ENCODE measurements at regions of chr9 and their contacts with region 1.

Region 1: GRCh38 chr9:95510709-95511615 is 5.8 kb downstream of the PTCH1 start:
- DNase-seq: peak; percentile 82
- H3K4me3 Mint-ChIP-seq: peak overlapping the region; percentile 88
- H3K27ac Mint-ChIP-seq: peak overlapping the region; percentile 81
- H3K4me1 Mint-ChIP-seq: peaks cover 30% of the 10 kb centered on the region
- H3K27me3 Mint-ChIP-seq: peaks cover 46% of the 10 kb centered on the region

Region 2: DNA sequence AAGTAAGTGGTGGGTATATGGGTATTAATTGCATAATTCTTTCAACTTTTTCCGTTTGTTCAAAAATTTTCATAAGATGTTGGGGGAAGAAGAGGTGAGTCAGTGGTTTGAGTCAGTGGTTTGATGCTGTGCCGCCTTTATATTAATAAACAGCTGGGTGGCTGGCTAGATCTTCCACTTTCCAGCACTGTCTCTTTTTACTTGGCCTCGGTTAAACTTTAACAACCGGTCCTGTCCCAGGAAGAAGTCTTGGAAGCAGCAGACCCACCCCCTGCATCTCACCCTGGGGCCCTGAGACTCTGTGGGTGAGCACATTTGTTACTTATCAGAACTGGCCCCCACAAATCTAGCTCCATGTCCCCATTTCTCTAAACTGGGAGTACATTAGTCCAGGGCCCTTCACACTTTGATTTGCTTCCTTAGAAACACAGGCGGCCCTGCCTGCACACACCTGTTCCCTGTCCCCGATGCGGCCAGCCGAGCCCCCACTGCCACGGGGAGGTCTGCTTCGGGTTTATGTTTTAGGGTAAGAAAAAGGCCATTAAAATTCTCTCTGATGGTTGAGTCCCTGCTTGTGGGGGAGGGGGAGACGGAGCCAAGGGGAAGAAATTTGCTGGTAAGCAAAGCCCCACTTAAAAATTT is 84.9 kb before region 1 on chr9:
- intact Hi-C with region 1: loop called (anchors 10 kb)
- DNase-seq: no peak
- H3K4me3 Mint-ChIP-seq: peak overlapping the region; percentile 42
- H3K27ac Mint-ChIP-seq: no peak overlapping the region
- H3K4me1 Mint-ChIP-seq: peaks cover 9% of the 10 kb centered on the region
- H3K27me3 Mint-ChIP-seq: peaks cover 3% of the 10 kb centered on the region

Region 3: DNA sequence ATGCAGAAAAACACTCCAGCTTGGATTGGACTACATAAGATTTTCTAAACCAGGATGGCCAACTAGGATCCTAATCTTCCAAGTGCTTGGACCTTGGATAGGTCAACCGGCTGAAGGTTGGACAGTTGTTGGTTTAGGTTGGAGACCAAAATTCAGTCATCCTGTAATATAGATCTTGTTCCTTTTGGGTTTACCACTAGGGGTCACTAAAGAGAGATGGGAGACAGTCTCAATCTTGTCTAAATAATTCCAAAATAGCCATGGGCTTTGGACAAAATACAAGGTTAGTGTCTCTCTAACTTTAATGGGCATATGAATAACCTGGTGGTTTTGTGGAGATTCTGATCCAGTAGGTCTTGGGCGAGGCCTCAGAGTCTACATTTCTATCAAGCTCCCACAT is 215.8 kb after region 1 on chr9:
- intact Hi-C with region 1: loop called (anchors 2 kb)
- DNase-seq: no peak
- H3K4me3 Mint-ChIP-seq: no peak overlapping the region
- H3K27ac Mint-ChIP-seq: no peak overlapping the region
- H3K4me1 Mint-ChIP-seq: peaks cover 41% of the 10 kb centered on the region
- H3K27me3 Mint-ChIP-seq: peaks cover 10% of the 10 kb centered on the region

Region 4: DNA sequence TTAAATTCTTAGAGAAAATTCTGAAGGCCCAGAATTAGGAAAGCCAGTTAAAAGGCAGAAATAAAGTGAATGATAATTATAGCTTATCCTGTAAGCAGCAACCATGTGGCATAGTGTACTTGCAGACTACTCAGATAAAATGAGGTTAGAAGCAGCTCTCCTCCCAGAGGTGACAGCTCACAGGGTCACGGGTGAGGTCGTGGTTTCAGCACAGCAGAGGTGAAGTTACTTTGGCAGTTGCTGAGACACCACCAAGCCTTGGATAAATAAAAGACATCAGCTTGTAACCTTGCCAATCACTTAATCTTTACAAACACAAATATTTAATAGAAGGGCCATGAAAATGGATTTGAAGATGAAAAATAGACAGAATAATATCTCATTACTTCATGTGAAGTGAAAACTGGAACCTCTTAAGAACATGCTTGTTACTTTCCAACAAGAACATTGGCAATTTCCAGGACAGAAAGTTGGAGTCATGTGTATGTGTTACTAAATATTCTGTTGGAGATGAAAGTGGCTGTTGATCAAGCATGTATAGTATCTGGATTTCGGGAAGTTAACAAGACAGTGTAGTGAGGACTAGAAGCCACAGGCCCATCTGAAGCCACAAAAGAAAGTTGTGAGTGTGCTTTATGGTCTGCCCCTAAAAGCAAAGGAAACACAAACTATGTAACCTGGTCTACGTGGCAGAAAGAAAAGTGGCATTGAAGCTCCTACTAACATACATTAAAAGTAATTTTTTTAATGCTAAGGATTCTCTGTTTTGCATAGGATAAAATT is 498.9 kb after region 1 on chr9:
- intact Hi-C with region 1: loop called (anchors 5 kb)
- DNase-seq: peak; percentile 74
- H3K4me3 Mint-ChIP-seq: no peak overlapping the region
- H3K27ac Mint-ChIP-seq: peak overlapping the region; percentile 92
- H3K4me1 Mint-ChIP-seq: peaks cover 54% of the 10 kb centered on the region
- H3K27me3 Mint-ChIP-seq: no peaks in the 10 kb centered on the region

Region 5: GRCh38 chr9:96217754-96218693 is 707.1 kb after region 1 on chr9:
- intact Hi-C with region 1: loop called (anchors 5 kb)
- DNase-seq: peak; percentile 64
- H3K4me3 Mint-ChIP-seq: peak overlapping the region; percentile 67
- H3K27ac Mint-ChIP-seq: no peak overlapping the region
- H3K4me1 Mint-ChIP-seq: peaks cover 13% of the 10 kb centered on the region
- H3K27me3 Mint-ChIP-seq: peaks cover 60% of the 10 kb centered on the region

Measured in activated T-helper 2 cell treated with anti-CD3 and anti-CD28 coated beads, Interferon-gamma antibody, Interleukin-2, Interleukin-4, amounts not matched to agents 10 μg/mL and 5 μg/mL and 100 μg/mL, durations not matched to agents 14 hours and 24 hours and 36 hours (primary cell).